ENCODE measurements at regions of chr12 and their contacts with region 1.

Region 1: GRCh38 chr12:69738351-69739286 is at the start of gene RAB3IP:
- DNase-seq: peak; percentile 87
- H3K4me3 Mint-ChIP-seq: peak within 1 kb of the TSS; percentile 81
- H3K27ac Mint-ChIP-seq: peak within 1 kb of the TSS; percentile 70
- H3K4me1 Mint-ChIP-seq: peaks cover 13% of the 10 kb centered on the region
- H3K27me3 Mint-ChIP-seq: peaks cover 33% of the 10 kb centered on the region
- total RNA-seq, gene RAB3IP: 29.8 and 37.7 TPM in 2 replicates

Region 2: GRCh38 chr12:68610370-68611093 is 1128.1 kb before region 1 on chr12 and contains the start of gene RAP1B:
- intact Hi-C with region 1: no loop called
- DNase-seq: peak; percentile 88
- H3K4me3 Mint-ChIP-seq: peak within 1 kb of the TSS; percentile 94
- H3K27ac Mint-ChIP-seq: peak within 1 kb of the TSS; percentile 97
- H3K4me1 Mint-ChIP-seq: peaks cover 43% of the 10 kb centered on the region
- H3K27me3 Mint-ChIP-seq: no peaks in the 10 kb centered on the region
- total RNA-seq, gene RAP1B: 174 and 182 TPM in 2 replicates

Region 3: GRCh38 chr12:69585189-69586062 is 153.2 kb before region 1 on chr12 and contains the start of gene CCT2:
- intact Hi-C with region 1: loop called (anchors 2 kb)
- DNase-seq: peak; percentile 95
- H3K4me3 Mint-ChIP-seq: peak within 1 kb of the TSS; percentile 97
- H3K27ac Mint-ChIP-seq: peak within 1 kb of the TSS; percentile 97
- H3K4me1 Mint-ChIP-seq: peaks cover 15% of the 10 kb centered on the region
- H3K27me3 Mint-ChIP-seq: no peaks in the 10 kb centered on the region
- total RNA-seq, gene CCT2: 409 and 416 TPM in 2 replicates

Region 4: DNA sequence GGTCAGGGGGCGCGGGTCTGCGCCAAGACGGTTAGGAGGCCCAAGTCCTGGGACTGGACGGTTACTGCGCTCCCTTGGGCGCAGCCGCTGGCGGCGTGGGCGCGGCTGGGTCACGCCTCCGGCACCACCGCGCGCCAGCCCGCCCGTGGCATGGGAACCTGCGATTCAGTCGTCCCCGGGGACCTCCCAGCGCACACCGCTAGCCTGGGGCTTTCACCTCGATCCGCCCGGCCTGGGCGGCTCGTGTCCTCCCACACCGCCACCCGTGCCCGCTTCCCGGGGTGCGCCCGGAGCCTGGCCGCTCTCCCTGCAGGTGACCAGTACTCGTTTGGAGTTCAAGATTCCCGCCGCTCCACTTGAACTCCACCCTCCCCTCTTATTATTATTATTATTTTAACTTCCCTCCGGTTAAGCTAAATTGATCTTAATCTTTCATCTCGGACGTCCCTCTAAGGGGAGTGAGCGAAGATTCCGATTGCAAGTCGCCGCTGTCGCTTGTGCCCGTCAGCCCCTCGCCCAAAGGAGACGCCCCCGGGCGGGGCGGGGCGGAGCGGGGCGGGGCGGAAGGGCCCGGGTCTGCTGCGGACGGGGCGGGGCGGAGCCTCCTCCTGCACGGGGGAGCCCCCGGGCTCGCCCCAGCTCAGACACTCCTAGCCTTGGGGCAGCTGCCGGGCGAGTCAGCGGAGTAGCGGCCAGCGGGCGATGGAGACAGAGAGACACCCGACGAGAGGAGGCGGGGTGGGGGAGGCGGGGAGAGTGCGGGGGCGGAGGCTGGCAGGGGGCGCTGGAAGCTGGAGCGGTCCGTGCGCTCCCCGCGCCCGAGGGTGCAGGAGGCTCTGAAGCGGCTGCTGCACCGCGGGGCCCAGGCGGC is 627.3 kb after region 1 on chr12 and contains the start of gene KCNMB4:
- intact Hi-C with region 1: loop called (anchors 10 kb)
- DNase-seq: peak; percentile 68
- H3K4me3 Mint-ChIP-seq: peak within 1 kb of the TSS; percentile 87
- H3K27ac Mint-ChIP-seq: no peak within 1 kb of the TSS
- H3K4me1 Mint-ChIP-seq: peaks cover 21% of the 10 kb centered on the region
- H3K27me3 Mint-ChIP-seq: peaks cover 33% of the 10 kb centered on the region
- total RNA-seq, gene KCNMB4: 0.37 and 0.55 TPM in 2 replicates